ENCODE measurements at regions of chr17 and their contacts with region 1.

Region 1: DNA sequence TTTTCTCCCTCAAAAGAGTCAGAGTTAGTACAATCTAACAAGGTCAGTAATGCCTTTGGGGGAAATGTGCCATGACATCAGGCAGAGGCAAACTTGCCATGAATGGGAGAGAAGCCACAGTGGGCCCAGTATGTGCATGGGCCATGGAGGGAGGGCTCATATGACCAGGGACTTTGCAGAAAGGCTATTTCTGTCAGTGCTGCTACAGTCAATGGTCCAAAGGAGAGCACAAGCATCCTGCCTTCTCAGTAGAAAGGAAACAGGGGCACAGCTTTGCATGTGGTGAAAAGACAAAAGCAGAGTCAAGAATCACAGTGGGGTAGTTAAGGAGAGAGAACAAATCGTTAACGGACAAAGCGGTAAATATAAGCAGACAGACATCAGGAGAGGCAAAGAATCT is 11.2 kb upstream of the CORO6 start:
- DNase-seq: no peak

Region 2: DNA sequence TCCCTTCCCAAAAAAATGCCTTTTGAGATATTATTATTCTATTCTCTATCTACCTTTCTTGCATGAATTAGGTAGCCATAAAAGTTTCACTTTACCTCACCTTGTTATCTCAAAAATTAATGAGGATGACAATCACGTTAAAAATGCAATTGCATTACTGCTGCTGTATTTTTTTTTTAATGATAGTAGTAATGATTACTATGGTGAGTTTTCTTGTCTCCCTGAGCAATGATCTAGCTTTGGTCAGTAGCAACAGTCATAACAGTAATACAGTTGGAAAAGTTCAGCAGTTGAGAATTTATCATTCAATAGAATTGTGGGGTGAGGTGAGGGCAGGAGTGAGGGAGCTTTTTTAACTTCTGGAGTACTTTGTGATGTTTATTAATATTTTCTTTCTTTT is 307.4 kb after region 1 on chr17 and contains the start of gene EFCAB5:
- CTCF ChIA-PET with region 1: interaction called, 10 read pairs
- POLR2A ChIA-PET with region 1: no interaction called
- DNase-seq: no peak